ENCODE measurements at regions of chr7 and their contacts with region 1.

Region 1: GRCh38 chr7:55048221-55048859 is 29.5 kb downstream of the EGFR start:
- DNase-seq: peak; percentile 67 to 72
- ATAC-seq: peak; percentile 93 to 95
- H3K4me3 ChIP-seq: no peak overlapping the region
- H3K27ac ChIP-seq: peak overlapping the region; percentile 44 to 77 (median 70)
- H3K4me1 ChIP-seq: peaks cover 51 to 54% of the 10 kb centered on the region in 2 donors
- H3K27me3 ChIP-seq: no peaks in the 10 kb centered on the region
- CTCF ChIP-seq: no peak
- POLR2A ChIP-seq: no peak

Region 2: DNA sequence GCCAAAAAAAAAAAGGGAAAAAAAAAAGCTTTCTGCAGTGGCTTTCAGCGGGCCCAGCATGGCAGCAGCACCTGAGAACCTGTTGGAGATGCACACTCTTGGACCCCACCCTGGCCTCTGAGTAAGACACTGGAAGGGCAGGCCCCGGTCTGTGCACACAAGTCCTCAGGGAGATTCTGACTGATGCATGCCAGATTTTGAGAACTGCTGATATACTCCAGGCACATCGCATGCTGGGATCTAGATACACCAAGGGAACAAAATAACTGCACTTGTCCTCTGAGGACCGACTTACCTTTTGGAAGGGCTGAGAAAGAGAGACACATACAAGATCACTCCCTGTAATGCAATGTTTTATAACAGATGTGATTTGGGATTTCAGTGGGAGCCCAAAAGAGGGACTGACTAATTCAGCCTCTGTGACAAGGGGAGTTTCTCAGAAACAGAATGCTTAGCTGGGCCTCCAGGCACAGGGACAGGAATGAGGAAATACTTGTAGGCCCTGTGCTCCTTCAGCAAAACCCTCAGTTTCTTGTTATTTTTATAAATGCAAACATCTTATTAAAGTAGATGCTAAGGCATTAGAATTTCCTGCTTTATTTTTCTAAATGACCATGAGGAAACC is 21.4 kb before region 1 on chr7:
- in situ Hi-C with region 1: no loop called
- intact Hi-C with region 1: loop called (anchors 2 kb)
- DNase-seq: peak in 1 of 2 donors; percentile 47
- ATAC-seq: peak; percentile 29 to 54
- H3K4me3 ChIP-seq: no peak overlapping the region
- H3K27ac ChIP-seq: peak overlapping the region; percentile 52 to 73 (median 62)
- H3K4me1 ChIP-seq: peaks cover 4 to 34% of the 10 kb centered on the region in 2 donors
- H3K27me3 ChIP-seq: no peaks in the 10 kb centered on the region
- CTCF ChIP-seq: no peak
- POLR2A ChIP-seq: no peak

Measured in gastrocnemius medialis (tissue), 4 donors.